Activated naive CD8-positive, alpha-beta T cell treated with anti-CD3 and anti-CD28 coated beads, Interleukin-2, amount 10 ng/mL, durations not matched to agents 7 days and 5 days (primary cell): ENCODE measurements at regions of chr2 and their contacts with region 1.

Region 1: GRCh38 chr2:113167115-113167932 is 6.4 kb upstream of the PSD4 start:
- DNase-seq: peak; percentile 56
- ATAC-seq: peak; percentile 76
- H3K4me3 Mint-ChIP-seq: peak overlapping the region; percentile 81
- H3K27ac Mint-ChIP-seq: peak overlapping the region; percentile 94
- H3K4me1 Mint-ChIP-seq: peaks cover 60% of the 10 kb centered on the region
- H3K27me3 Mint-ChIP-seq: no peaks in the 10 kb centered on the region

Region 2: GRCh38 chr2:113025737-113026136 is 141.6 kb before region 1 on chr2:
- POLR2A ChIA-PET with region 1: no interaction called
- DNase-seq: no peak
- ATAC-seq: no peak
- H3K4me3 Mint-ChIP-seq: no peak overlapping the region
- H3K27ac Mint-ChIP-seq: no peak overlapping the region
- H3K4me1 Mint-ChIP-seq: no peaks in the 10 kb centered on the region
- H3K27me3 Mint-ChIP-seq: peaks cover 35% of the 10 kb centered on the region

Region 3: DNA sequence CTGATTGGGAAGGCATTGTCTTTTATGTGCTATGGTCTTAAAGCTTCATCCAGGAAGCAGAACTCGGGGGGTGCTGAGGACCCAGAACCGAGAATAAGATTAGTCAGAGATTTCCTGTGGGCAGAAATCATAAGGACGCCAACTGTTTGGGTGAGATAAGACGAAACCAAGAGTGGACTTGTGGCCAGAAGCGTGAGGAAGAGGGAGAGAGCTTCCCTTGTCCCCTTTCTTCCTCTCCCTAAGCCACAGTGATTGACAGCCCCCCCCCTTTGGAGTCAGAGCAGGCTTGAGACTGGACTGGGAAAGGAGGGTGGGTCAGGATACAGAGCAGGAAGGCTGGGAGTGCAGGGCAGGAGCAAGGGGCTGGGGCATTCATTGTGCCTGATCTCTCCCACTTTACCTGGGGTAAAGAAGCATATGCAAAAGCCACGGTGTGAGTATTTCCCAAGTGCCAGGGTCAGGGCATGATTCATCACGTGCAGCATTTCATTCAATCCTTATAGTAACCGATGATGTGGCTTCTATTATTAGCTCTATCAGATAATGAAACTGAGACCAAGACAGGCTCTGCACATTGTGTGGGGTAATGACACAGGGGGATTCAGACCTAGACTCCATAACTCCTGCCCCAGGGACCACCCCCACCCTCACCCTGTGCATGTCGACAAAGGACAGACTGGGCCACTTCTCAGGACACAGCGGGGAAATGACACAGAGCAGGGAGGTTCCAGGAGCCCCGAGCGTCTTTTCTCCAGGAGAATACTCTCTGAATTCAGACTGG is 43.0 kb before region 1 on chr2:
- POLR2A ChIA-PET with region 1: no interaction called
- DNase-seq: no peak
- ATAC-seq: peak; percentile 55
- H3K4me3 Mint-ChIP-seq: peak overlapping the region; percentile 53
- H3K27ac Mint-ChIP-seq: no peak overlapping the region
- H3K4me1 Mint-ChIP-seq: peaks cover 19% of the 10 kb centered on the region
- H3K27me3 Mint-ChIP-seq: peaks cover 24% of the 10 kb centered on the region

Region 4: DNA sequence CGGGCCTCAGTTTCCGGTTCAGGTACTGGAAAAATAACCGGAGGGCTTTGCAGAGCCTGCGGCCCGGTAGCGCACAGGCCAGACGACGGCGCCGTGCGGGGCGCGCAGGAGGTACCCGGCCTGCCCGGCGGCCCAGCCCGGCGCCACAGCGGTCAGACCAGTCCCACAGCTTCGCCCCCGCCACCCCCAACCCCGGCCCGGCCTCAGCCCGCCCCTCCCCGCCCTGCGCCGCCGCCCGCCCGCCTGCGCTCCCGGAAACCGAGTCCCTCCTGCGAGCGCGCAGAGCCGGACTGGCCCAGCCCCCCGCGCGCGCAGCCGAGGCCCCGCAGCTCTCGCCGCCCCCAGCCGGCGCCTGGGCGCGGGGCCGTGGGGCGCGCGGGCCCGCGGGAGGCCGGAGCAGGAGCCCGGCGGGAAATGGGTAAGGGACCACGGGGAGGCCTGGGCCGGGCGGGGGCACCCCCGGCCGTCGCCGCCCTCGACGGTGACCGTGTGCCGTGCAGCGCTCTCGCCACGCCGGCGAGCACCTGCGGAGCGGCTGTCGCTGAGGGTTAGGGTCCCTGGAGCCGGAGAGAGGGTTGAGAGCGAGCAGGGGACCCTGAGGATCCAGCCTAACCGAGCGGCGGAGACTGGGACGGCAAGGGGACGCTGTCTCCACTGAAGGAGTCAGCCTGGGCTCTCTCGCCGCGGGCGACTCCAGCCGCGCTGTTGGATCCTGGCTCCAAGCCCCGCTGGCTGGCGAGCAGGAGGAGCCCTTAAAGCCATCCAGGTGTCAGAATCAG is 10.0 kb before region 1 on chr2:
- POLR2A ChIA-PET with region 1: interaction called, 85 read pairs
- DNase-seq: peak; percentile 77
- ATAC-seq: peak; percentile 86
- H3K4me3 Mint-ChIP-seq: peak overlapping the region; percentile 85
- H3K27ac Mint-ChIP-seq: peak overlapping the region; percentile 80
- H3K4me1 Mint-ChIP-seq: peaks cover 24% of the 10 kb centered on the region
- H3K27me3 Mint-ChIP-seq: peaks cover 2% of the 10 kb centered on the region